Vagina (tissue), 2 donors: ENCODE measurements at regions of chr7 and their contacts with region 1.

Region 1: GRCh38 chr7:2309889-2310331 is 4.3 kb downstream of the SNX8 start:
- DNase-seq: no peak
- H3K4me3 ChIP-seq: no peak overlapping the region
- H3K27ac ChIP-seq: no peak overlapping the region
- H3K4me1 ChIP-seq: peaks cover 20% of the 10 kb centered on the region
- H3K27me3 ChIP-seq: no peaks in the 10 kb centered on the region
- CTCF ChIP-seq: no peak
- POLR2A ChIP-seq: no peak

Region 2: DNA sequence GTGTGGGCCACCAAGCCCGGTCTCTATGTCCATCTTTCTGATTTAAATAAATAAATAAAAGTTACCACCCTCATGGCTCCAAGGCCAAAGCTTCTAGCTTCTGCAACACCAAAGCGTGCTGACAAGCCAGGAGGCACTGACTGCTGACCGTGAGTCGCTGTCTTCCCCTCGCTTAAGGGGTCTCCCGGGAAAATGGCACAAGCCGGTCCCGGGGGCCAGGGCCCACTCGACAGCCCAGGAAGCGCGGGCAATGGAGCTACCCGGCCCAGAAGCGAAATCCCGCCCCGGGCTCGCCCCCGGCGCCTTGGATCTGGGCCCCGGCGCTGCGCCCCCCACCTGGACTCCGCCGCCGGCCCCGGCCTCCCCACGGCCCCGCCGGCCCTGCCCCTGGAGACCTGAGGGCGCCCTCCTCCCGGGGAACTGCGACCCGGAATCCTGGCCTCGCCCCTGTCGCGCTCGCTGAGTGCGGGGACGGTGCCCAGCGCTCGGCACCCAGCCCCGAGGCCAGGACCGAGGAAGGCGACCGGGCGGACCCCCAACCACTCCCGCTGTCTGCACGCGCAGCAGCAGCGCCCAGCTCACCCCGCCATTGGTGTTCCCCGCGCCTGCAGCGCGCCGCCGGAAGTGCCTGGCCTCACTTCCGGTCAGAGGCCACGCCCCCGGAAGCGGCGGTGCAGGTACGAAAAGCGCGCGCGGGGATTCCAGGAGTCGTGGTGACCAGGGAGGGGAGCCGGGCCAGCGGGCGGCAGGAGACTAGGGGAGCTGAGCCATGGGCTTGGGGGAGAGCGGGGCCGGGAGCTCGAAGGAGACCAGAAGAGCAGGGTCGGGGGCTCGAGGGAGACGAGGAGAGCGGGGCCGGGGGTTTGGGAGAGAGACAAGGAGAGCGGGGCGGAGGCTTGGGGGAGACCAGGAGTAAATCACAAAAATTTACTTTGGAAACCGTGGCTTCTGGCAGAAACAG is 68.0 kb before region 1 on chr7 and contains the starts of genes MRM2 and NUDT1:
- intact Hi-C with region 1: loop called (anchors 5 kb)
- DNase-seq: no peak
- H3K4me3 ChIP-seq: peak within 1 kb of the TSS; percentile 93 to 98
- H3K27ac ChIP-seq: peak within 1 kb of the TSS; percentile 76
- H3K4me1 ChIP-seq: peaks cover 24% of the 10 kb centered on the region
- H3K27me3 ChIP-seq: no peaks in the 10 kb centered on the region
- CTCF ChIP-seq: no peak
- POLR2A ChIP-seq: no peak
- total RNA-seq, gene MRM2: 8.3 TPM
- total RNA-seq, gene NUDT1: 19.4 TPM